Left lung (tissue), 14 donors: ENCODE measurements at regions of chr3 and their contacts with region 1.

Region 1: DNA sequence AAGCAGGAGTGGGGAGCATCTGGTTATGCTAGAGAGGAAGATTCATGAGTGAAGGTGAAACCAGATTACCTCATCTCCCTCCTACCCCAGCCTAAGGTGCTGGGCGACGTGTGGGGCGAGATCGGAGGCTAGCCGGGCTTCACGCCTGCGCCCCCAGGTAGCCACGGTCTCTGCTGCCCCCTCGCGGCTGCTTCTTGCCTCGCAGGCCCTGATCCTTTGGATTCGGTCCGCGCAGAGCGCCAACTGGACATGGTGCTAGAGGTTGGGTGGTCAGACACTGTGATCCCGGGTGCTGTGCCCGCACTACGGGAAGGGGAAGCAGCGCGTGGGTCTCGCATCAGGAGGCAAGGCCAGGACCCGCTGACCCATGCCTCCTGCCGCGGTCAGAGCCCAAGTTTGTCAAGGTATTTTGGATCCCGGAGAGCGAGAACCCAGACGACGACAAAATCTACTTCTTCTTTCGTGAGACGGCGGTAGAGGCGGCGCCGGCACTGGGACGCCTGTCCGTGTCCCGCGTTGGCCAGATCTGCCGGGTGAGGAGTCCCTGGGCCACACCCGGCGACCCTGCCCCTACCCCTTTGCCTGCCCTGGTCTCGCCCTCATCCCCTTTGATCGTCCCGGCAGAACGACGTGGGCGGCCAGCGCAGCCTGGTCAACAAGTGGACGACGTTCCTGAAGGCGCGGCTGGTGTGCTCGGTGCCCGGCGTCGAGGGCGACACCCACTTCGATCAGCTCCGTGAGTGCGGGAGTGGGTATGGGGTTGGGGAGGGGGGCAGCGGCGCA is 4.2 kb downstream of the SEMA3B start:
- DNase-seq: peak; percentile 79 to 99 (median 87)
- ATAC-seq: peak; percentile 73
- H3K4me3 ChIP-seq: peak overlapping the region; percentile 6 to 31
- H3K27ac ChIP-seq: peak overlapping the region in 1 of 2 donors; percentile 13
- H3K4me1 ChIP-seq: peaks cover 20 to 38% of the 10 kb centered on the region in 2 donors
- H3K27me3 ChIP-seq: peaks cover 0 to 50% of the 10 kb centered on the region in 2 donors
- CTCF ChIP-seq: peak; percentile 97 to 100

Region 2: DNA sequence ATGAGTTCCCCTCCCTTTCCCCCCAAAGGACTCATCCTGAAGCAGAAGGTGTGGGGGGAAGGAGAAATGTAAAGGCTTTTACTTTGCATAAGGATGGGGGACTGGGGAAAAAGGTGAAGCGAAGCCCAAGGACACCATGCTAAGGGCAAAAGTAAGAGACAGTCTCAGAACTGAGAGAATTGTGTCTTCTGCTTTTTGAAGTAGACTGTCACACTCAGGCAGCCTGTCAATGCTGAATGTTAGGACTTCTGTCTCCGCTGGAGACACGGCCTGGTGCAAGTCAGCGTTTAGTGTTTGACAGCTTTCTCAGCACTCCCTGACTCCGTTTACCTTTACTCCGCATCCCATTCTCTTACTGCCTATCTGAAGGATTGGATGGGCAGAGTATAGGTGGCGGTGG is 170.5 kb before region 1 on chr3:
- intact Hi-C with region 1: no loop called
- DNase-seq: no peak
- ATAC-seq: no peak
- H3K4me3 ChIP-seq: no peak overlapping the region
- H3K27ac ChIP-seq: no peak overlapping the region
- H3K4me1 ChIP-seq: peaks cover 0 to 8% of the 10 kb centered on the region in 2 donors
- H3K27me3 ChIP-seq: no peaks in the 10 kb centered on the region
- CTCF ChIP-seq: no peak

Region 3: DNA sequence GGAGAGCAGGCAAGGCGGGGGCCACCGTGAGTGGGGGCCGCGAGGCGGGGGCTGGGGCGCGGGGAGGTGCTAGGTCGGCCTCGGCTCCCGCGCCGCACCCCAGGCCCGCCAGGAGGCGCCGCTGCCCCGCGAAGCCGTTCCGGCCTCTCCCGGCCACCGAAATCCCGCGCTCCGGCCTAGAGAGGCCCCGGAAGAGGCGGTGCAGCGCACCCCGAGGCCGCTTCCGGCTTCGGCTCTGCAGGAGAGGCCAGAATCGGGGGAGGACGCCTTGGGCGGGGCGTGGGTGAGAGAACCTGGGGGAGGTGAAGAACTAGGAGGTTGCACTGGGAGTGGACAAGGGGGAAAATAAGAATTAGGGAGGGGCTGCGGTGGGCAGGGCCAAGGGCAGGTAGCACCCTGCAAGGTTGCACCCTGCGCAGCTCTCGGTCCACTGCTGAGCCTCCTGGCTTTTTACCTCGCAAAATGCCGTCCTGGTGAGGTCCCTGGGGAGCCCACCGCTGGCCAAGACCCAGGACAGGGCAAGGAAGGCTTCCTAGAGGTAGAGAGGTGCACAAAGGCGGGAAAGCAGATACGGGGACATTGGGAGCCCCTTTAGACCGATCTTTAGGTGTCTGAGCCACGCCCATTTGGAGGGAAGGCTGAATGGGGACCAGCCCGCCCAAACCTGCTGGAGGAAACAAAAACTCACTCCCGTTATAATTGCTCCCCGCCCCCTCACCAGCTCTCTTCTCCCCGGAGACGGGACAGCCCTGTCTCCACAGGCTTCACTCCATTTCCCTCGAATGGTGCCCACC is 45.5 kb before region 1 on chr3:
- intact Hi-C with region 1: loop called in 1 of 2 experiments (anchors 5 kb)
- DNase-seq: peak; percentile 86 to 99 (median 95)
- ATAC-seq: peak; percentile 91
- H3K4me3 ChIP-seq: peak overlapping the region; percentile 66 to 72
- H3K27ac ChIP-seq: peak overlapping the region; percentile 69 to 91
- H3K4me1 ChIP-seq: peaks cover 17 to 48% of the 10 kb centered on the region in 2 donors
- H3K27me3 ChIP-seq: peaks cover 0 to 13% of the 10 kb centered on the region in 2 donors
- CTCF ChIP-seq: peak; percentile 89 to 92